ENCODE measurements at regions of chr1 and their contacts with region 1.

Region 1: DNA sequence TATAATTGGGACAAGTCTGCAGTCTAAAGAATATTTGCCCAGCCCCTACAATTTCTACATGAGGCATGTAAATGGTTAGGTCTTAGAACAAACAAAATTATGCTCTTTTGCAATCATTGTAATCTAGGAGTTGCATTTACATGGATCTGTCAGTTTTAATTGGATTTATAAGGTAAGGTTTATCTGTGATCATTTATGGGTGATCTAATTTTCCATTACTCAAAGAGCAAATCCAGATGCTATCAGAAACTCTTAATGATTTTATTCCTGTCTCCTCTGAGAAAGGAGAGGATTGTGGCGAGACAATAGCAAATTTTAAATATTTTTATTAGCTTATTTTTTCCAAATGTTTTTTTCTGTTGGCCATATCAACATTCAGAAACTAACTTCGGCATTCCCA is 14.1 kb upstream of the NEGR1 start:
- DNase-seq: no peak
- H3K4me3 ChIP-seq: no peak overlapping the region
- H3K27ac ChIP-seq: no peak overlapping the region
- H3K4me1 ChIP-seq: no peaks in the 10 kb centered on the region
- H3K27me3 ChIP-seq: no peaks in the 10 kb centered on the region
- CTCF ChIP-seq: no peak
- POLR2A ChIP-seq: no peak

Region 2: DNA sequence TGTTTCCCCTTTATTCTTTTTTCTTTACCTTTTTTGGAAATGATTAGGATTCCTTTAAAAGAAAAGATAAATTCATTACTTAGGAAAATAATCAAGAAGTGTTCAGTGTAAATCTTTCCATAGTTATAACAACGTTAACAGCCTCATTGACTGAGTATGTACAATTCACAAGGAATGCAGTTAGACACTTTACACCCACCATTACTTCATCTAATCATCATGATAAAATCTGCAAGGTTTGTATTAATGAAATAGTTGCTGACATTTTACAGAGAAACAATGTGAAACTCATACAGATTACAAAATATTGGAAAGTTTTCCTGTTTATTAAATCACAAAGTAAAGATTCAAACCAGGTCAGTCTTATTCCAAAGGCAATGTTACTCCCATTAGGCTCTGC is 45.2 kb after region 1 on chr1:
- intact Hi-C with region 1: loop called (anchors 1 kb)
- DNase-seq: no peak
- H3K4me3 ChIP-seq: no peak overlapping the region
- H3K27ac ChIP-seq: no peak overlapping the region
- H3K4me1 ChIP-seq: no peaks in the 10 kb centered on the region
- H3K27me3 ChIP-seq: no peaks in the 10 kb centered on the region
- CTCF ChIP-seq: no peak
- POLR2A ChIP-seq: no peak

Region 3: DNA sequence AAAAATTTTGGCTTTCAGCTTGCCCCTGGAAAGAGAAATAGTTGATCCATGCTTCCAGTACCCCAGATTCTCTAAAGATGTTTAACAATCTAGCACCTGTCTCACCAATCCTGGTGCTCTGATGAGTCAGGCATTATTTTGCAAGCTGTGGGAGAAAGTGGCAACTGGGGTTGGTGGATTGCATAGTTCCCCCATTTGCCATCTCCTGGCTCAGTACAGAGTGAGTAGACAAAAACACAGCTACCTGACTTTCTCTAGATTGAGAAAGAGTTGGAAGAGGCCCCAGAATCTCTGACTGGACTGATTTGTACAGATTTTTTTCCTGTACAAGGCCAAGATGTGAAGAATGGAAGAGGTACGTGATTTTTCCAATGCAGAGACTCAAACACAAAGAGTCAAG is 60.9 kb after region 1 on chr1:
- intact Hi-C with region 1: no loop called
- DNase-seq: no peak
- H3K4me3 ChIP-seq: no peak overlapping the region
- H3K27ac ChIP-seq: no peak overlapping the region
- H3K4me1 ChIP-seq: no peaks in the 10 kb centered on the region
- H3K27me3 ChIP-seq: no peaks in the 10 kb centered on the region
- CTCF ChIP-seq: no peak
- POLR2A ChIP-seq: no peak

Measured in spleen (tissue), 13 donors.